ENCODE measurements at regions of chr19 and their contacts with region 1.

Region 1: GRCh38 chr19:34963573-34964409 is at the start of gene ZNF792:
- DNase-seq: peak; percentile 64 to 76
- ATAC-seq: peak; percentile 76 to 87 (median 84)
- H3K4me3 ChIP-seq: peak within 1 kb of the TSS; percentile 74 to 100 (median 93)
- H3K27ac ChIP-seq: peak within 1 kb of the TSS; percentile 38 to 94 (median 89)
- H3K4me1 ChIP-seq: peaks cover 0 to 21% (median 17%) of the 10 kb centered on the region in 9 donors
- H3K27me3 ChIP-seq: no peaks in the 10 kb centered on the region
- CTCF ChIP-seq: peak in 1 of 9 donors; percentile 2
- total RNA-seq, gene ZNF792: 2.0 to 5.9 (median 4.0) TPM

Region 2: DNA sequence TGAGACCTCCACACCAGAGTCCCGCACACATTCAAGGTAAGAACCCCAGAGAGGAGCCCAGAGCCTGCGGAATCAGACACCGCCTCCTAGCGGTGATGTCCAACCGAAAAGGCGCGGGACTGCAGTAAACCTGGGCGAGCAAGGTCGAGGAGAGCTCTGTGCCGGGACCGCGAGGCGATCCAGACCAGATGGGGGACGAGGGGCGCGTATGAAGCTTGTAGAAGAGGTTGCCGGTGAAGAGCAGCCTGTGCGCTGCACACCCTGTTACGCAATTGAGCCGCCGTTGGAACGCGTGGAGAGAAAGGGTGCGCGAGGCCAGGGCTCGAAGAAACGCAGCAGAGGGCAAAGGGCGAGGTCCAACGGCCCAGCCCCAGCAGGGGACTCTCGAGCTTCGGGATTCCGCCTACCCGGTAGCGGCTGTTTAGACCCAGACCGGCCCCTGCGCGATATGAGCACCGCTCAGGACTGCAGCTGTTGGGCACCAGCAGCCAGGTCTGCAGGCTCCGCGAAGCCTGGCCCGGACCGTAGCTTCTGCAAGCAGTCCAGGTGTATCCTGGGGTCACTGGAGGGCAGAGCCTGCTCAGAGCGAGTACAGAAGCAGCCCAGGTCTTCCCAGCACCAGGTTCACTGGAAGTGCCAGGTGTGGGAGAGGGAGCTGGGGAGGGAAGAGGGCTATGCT is 124.9 kb before region 1 on chr19:
- intact Hi-C with region 1: loop called in 1 of 10 experiments (anchors 5 kb)
- DNase-seq: peak in 1 of 2 donors; percentile 33
- ATAC-seq: peak; percentile 13 to 62 (median 41)
- H3K4me3 ChIP-seq: peak overlapping the region in 8 of 10 donors; percentile 4 to 43 (median 33)
- H3K27ac ChIP-seq: peak overlapping the region in 2 of 10 donors; percentile 79 to 87
- H3K4me1 ChIP-seq: peaks cover 5 to 37% (median 26%) of the 10 kb centered on the region in 9 donors
- H3K27me3 ChIP-seq: no peaks in the 10 kb centered on the region
- CTCF ChIP-seq: peak in 7 of 9 donors; percentile 3 to 45 (median 36)

Region 3: GRCh38 chr19:34926685-34927375 is 37.0 kb before region 1 on chr19 and contains the start of gene ZNF30:
- intact Hi-C with region 1: loop called in 1 of 10 experiments (anchors 5 kb)
- DNase-seq: peak; percentile 92 to 94
- ATAC-seq: peak; percentile 99 to 100 (median 100)
- H3K4me3 ChIP-seq: peak within 1 kb of the TSS; percentile 52 to 79 (median 67)
- H3K27ac ChIP-seq: peak within 1 kb of the TSS; percentile 16 to 86 (median 82)
- H3K4me1 ChIP-seq: peaks cover 0 to 22% (median 10%) of the 10 kb centered on the region in 9 donors
- H3K27me3 ChIP-seq: peaks cover 0 to 11% (median 0%) of the 10 kb centered on the region in 7 donors
- CTCF ChIP-seq: peak in 2 of 9 donors; percentile 4 to 6
- total RNA-seq, gene ZNF30: 1.6 to 4.5 (median 2.6) TPM